ENCODE measurements at regions of chr16 and their contacts with region 1.

Region 1: GRCh38 chr16:58418601-58419000 is 26.3 kb downstream of the GINS3 start:
- DNase-seq: no peak
- ATAC-seq: no peak
- H3K4me3 Mint-ChIP-seq: no peak overlapping the region
- H3K27ac Mint-ChIP-seq: peak overlapping the region; percentile 21
- H3K4me1 Mint-ChIP-seq: peaks cover 38% of the 10 kb centered on the region
- H3K27me3 Mint-ChIP-seq: peaks cover 3% of the 10 kb centered on the region
- CTCF ChIP-seq: no peak

Region 2: DNA sequence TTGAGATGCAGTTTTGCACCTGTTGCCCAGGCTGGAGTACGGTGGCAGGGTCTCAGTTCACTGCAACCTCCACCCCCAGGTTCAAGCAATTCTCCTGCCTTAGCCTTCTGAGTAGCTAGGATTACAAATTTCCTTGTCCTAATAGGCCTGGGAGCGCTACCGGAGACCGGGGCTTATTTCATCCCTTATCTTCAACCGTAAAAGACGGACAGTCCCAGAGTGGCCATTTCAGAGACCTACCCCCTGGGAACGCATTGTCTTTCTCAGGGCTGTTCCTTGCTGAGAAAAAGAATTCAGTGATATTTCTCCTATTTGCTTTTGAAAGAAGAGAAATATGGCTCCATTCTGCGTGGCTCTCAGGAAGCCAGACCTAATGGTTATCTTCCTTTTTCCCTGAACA is 65.9 kb before region 1 on chr16:
- CTCF ChIA-PET with region 1: no interaction called
- POLR2A ChIA-PET with region 1: no interaction called
- intact Hi-C with region 1: loop called (anchors 10 kb)
- DNase-seq: no peak
- ATAC-seq: no peak
- H3K4me3 Mint-ChIP-seq: no peak overlapping the region
- H3K27ac Mint-ChIP-seq: no peak overlapping the region
- H3K4me1 Mint-ChIP-seq: no peaks in the 10 kb centered on the region
- H3K27me3 Mint-ChIP-seq: peaks cover 13% of the 10 kb centered on the region
- CTCF ChIP-seq: no peak

Region 3: GRCh38 chr16:58428621-58429542 is 10.3 kb after region 1 on chr16:
- CTCF ChIA-PET with region 1: no interaction called
- POLR2A ChIA-PET with region 1: no interaction called
- intact Hi-C with region 1: no loop called
- DNase-seq: no peak
- ATAC-seq: no peak
- H3K4me3 Mint-ChIP-seq: no peak overlapping the region
- H3K27ac Mint-ChIP-seq: no peak overlapping the region
- H3K4me1 Mint-ChIP-seq: peaks cover 16% of the 10 kb centered on the region
- H3K27me3 Mint-ChIP-seq: no peaks in the 10 kb centered on the region
- CTCF ChIP-seq: no peak

Region 4: GRCh38 chr16:58459344-58460218 is 41.0 kb after region 1 on chr16:
- CTCF ChIA-PET with region 1: no interaction called
- POLR2A ChIA-PET with region 1: no interaction called
- intact Hi-C with region 1: loop called (anchors 5 kb)
- DNase-seq: no peak
- ATAC-seq: peak; percentile 45
- H3K4me3 Mint-ChIP-seq: no peak overlapping the region
- H3K27ac Mint-ChIP-seq: no peak overlapping the region
- H3K4me1 Mint-ChIP-seq: peaks cover 8% of the 10 kb centered on the region
- H3K27me3 Mint-ChIP-seq: peaks cover 15% of the 10 kb centered on the region
- CTCF ChIP-seq: no peak